Vagina (tissue), 2 donors: ENCODE measurements at regions of chr12 and their contacts with region 1.

Region 1: GRCh38 chr12:46108721-46109120 is 118.3 kb upstream of the SCAF11 start:
- DNase-seq: no peak
- H3K4me3 ChIP-seq: no peak overlapping the region
- H3K27ac ChIP-seq: no peak overlapping the region
- H3K4me1 ChIP-seq: no peaks in the 10 kb centered on the region
- H3K27me3 ChIP-seq: no peaks in the 10 kb centered on the region
- CTCF ChIP-seq: no peak
- POLR2A ChIP-seq: no peak

Region 2: DNA sequence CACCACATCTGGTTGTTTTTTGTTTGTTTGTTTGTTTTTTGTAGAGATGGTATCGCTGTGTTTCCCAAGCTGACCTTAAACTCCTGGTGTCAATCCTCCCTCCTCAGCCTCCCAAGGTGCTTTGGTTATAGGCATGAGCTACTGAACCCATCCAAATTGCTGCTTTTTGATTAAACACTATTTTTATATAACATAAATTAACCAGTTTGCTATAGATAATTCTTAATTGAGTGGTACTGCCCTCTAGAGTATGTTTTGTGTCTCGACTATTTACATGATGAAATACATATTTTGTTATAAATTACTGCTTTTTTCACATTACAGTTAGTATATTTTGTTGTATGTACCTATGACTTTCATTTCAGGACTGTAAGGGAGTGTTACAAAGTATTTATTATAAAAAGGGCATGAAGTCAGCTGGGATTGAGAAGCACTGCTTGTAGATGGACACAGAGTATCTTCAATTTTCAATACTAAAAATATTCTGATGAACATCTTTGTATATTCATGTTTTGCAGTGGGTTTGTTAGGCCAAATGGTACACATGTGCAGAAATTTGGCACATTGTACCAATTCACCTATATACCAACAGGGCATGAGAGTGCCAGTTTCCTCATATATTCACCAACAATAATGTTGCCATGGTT is 103.4 kb before region 1 on chr12:
- intact Hi-C with region 1: no loop called
- DNase-seq: no peak
- H3K4me3 ChIP-seq: no peak overlapping the region
- H3K27ac ChIP-seq: no peak overlapping the region
- H3K4me1 ChIP-seq: no peaks in the 10 kb centered on the region
- H3K27me3 ChIP-seq: no peaks in the 10 kb centered on the region
- CTCF ChIP-seq: peak in 1 of 3 experiments; percentile 15
- POLR2A ChIP-seq: no peak

Region 3: DNA sequence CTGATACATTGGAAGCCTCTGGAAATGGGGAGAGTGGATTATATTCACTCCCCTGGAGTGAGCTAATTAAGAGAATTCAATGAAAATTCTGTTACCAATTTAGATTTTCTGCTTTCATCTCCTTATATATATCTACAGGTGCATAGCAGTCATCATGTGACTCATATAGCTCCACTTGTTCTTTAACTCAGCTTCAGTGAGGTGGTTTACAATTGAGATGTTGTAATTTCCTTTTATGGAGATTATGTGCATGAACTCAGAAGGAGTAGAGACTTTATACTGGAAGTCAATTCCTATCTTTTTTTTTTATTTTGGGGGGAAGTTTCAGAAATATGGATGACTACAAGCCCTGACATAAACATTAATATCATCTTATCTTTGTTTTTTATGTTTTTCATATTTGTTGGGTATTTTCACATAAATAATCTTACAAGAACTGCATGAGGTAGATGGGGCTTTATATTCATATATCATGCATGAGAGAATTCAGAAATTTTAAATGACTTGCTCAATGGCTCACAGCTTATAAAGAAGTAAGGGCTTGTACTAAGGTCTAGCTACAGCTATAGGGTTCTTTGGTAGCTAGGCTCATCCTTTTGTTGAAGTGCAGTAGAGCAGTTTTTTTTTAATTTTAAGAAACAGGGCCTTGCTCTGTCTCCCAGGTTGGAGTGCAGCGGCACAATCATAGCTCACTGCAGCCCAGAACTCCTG is 26.1 kb before region 1 on chr12:
- intact Hi-C with region 1: loop called (anchors 1 kb)
- DNase-seq: no peak
- H3K4me3 ChIP-seq: no peak overlapping the region
- H3K27ac ChIP-seq: no peak overlapping the region
- H3K4me1 ChIP-seq: no peaks in the 10 kb centered on the region
- H3K27me3 ChIP-seq: no peaks in the 10 kb centered on the region
- CTCF ChIP-seq: no peak
- POLR2A ChIP-seq: no peak